GM12878 (cell line): ENCODE measurements at regions of chr1 and their contacts with region 1.

Region 1: GRCh38 chr1:173202430-173203145 is 4.5 kb downstream of the TNFSF4 start:
- DNase-seq: no peak
- ATAC-seq: peak; percentile 54
- H3K4me3 ChIP-seq: no peak overlapping the region
- H3K27ac ChIP-seq: no peak overlapping the region
- H3K4me1 ChIP-seq: peaks cover 14% of the 10 kb centered on the region
- H3K27me3 ChIP-seq: no peaks in the 10 kb centered on the region
- CTCF ChIP-seq: peak; percentile 54 to 69 (median 62)
- EP300 ChIP-seq: no peak
- POLR2A ChIP-seq: no peak
- RAD21 ChIP-seq: peak; percentile 90

Region 2: GRCh38 chr1:172751683-172752082 is 450.9 kb before region 1 on chr1:
- CTCF ChIA-PET with region 1: interaction called, 322 read pairs
- POLR2A ChIA-PET with region 1: no interaction called
- RAD21 ChIA-PET with region 1: interaction called, 201 read pairs
- SMC1A ChIA-PET with region 1: interaction called, 281 read pairs
- in situ Hi-C with region 1: loop called (anchors 5 kb)
- intact Hi-C with region 1: no loop called
- DNase-seq: no peak
- ATAC-seq: no peak
- H3K4me3 ChIP-seq: no peak overlapping the region
- H3K27ac ChIP-seq: no peak overlapping the region
- H3K4me1 ChIP-seq: peaks cover 3% of the 10 kb centered on the region; the same call in 1 of the 2 replicates
- H3K27me3 ChIP-seq: peaks cover 0 to 6% of the 10 kb centered on the region in 2 experiments; a peak in 2 of 4 replicates
- CTCF ChIP-seq: no peak
- EP300 ChIP-seq: no peak
- POLR2A ChIP-seq: no peak
- RAD21 ChIP-seq: no peak

Region 3: DNA sequence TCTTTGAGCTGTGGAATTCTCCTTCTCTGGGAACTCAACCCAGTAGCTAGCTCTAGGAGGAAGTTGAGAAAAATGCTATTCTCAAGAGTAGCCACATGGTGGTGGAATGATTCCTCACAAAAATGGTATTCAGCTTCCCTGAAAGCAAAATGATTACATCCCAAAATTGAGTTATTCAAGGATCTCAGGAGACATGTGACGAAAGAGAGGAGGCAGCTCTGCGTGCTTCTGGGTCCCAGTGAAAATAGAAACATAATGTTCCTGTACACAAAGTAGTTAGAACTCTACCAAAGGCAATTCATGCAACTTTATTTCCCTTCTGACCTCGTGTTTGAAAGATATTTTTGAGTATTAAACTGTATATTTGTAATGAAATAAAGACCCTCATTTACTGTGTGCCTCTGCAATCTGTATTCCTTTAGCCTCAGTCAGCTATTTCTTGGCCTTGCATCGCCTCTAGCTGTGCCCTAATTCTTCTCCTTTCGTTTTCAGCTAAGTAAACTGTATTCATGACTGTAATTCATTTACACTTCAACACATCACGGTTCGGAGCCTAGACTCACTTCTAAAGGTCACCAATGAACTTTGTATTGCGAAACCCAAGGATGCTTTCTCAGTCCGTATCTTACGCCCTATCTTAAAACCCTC is 376.4 kb before region 1 on chr1:
- CTCF ChIA-PET with region 1: interaction called, 414 read pairs
- POLR2A ChIA-PET with region 1: interaction called, 11 read pairs
- RAD21 ChIA-PET with region 1: interaction called, 245 read pairs
- SMC1A ChIA-PET with region 1: interaction called, 316 read pairs
- in situ Hi-C with region 1: loop called (anchors 5 kb)
- intact Hi-C with region 1: loop called (anchors 1 kb)
- DNase-seq: no peak
- ATAC-seq: peak; percentile 65
- H3K4me3 ChIP-seq: no peak overlapping the region
- H3K27ac ChIP-seq: no peak overlapping the region
- H3K4me1 ChIP-seq: peaks cover 4% of the 10 kb centered on the region; the same call in 1 of the 2 replicates
- H3K27me3 ChIP-seq: no peaks in the 10 kb centered on the region
- CTCF ChIP-seq: peak; percentile 47 to 61 (median 51); a peak in 5 of 6 replicates
- EP300 ChIP-seq: no peak
- POLR2A ChIP-seq: no peak
- RAD21 ChIP-seq: peak; percentile 81

Region 4: DNA sequence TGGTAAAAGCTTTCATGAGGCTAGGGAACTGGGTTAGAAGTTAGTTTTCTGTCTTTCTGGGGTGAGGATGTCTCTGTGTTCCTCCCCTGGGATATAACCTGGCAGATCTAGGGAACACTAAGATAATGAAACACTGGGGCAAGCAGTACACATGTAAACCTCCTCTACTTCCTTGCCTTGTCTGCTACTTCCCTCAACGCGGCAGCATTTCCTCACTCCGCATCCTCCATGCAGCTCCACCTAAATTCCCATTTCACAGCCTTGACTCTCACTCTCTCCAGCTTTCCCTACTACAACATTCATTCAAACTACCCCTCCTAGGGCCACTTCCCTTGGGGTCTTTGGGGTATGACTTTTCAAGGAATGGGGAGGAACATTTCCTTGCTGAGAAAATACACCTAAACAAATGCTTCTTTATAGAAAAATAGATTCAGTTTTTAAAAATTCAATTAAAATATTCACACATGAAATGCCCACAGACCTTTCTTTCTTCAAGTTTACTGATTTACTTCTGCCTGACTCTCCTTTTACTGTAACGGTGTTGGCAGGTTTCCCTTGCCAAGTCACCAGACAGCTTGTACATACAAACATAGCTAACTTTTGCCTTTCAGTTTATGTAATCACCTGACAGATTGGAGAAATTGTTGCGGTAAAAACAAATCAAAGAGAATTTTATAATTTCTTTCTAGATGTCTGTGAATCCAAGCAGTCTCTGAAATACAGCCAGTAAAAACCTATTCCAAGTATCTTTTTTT is 242.0 kb before region 1 on chr1:
- CTCF ChIA-PET with region 1: no interaction called
- POLR2A ChIA-PET with region 1: no interaction called
- RAD21 ChIA-PET with region 1: no interaction called
- SMC1A ChIA-PET with region 1: no interaction called
- in situ Hi-C with region 1: no loop called
- intact Hi-C with region 1: no loop called
- DNase-seq: no peak
- ATAC-seq: no peak
- H3K4me3 ChIP-seq: no peak overlapping the region
- H3K27ac ChIP-seq: no peak overlapping the region
- H3K4me1 ChIP-seq: no peaks in the 10 kb centered on the region
- H3K27me3 ChIP-seq: peaks cover 0 to 2% of the 10 kb centered on the region in 2 experiments; a peak in 2 of 4 replicates
- CTCF ChIP-seq: no peak
- EP300 ChIP-seq: no peak
- POLR2A ChIP-seq: no peak
- RAD21 ChIP-seq: no peak

Region 5: DNA sequence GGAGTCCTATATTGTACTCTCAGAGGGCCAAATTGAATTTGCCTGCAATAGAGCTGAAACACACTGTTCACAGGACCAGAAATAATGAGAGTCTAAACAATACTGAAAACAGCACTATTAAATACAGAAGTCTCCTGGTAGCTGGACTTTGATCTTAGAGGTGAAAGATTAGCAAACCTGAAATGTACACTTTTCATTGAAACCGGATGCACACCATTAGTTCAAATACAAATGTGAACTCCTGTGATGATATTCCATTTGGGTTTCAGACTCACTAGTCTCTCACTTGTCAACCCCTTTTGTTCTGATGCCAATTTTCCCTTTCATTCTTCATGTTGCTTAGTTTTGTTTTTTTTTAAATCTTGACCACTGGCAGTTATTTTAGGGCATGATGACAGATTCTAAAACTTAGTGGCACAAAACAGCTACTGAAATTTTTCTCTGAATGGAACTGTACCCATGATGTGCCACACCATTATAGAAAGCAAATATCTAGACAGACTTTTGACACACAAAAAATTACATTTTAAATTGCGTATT is 10.4 kb after region 1 on chr1:
- CTCF ChIA-PET with region 1: interaction called, 104 read pairs
- POLR2A ChIA-PET with region 1: interaction called, 9 read pairs
- RAD21 ChIA-PET with region 1: interaction called, 44 read pairs
- SMC1A ChIA-PET with region 1: interaction called, 189 read pairs
- in situ Hi-C with region 1: no loop called
- intact Hi-C with region 1: no loop called
- DNase-seq: peak; percentile 90
- ATAC-seq: peak; percentile 91
- H3K4me3 ChIP-seq: no peak overlapping the region
- H3K27ac ChIP-seq: no peak overlapping the region
- H3K4me1 ChIP-seq: peaks cover 5% of the 10 kb centered on the region
- H3K27me3 ChIP-seq: no peaks in the 10 kb centered on the region
- CTCF ChIP-seq: no peak
- EP300 ChIP-seq: peak; percentile 58 to 92; a peak in 3 of 4 replicates
- POLR2A ChIP-seq: no peak
- RAD21 ChIP-seq: 0 out of 2 replicates have a peak, but pooled peaks have one; percentile 13

Region 6: GRCh38 chr1:173255214-173255813 is 52.7 kb after region 1 on chr1:
- CTCF ChIA-PET with region 1: interaction called, 12 read pairs
- POLR2A ChIA-PET with region 1: no interaction called
- RAD21 ChIA-PET with region 1: interaction called, 10 read pairs
- SMC1A ChIA-PET with region 1: interaction called, 22 read pairs
- in situ Hi-C with region 1: no loop called
- intact Hi-C with region 1: no loop called
- DNase-seq: peak; percentile 16
- ATAC-seq: peak; percentile 67
- H3K4me3 ChIP-seq: no peak overlapping the region
- H3K27ac ChIP-seq: no peak overlapping the region
- H3K4me1 ChIP-seq: peaks cover 4% of the 10 kb centered on the region; the same call in 1 of the 2 replicates
- H3K27me3 ChIP-seq: no peaks in the 10 kb centered on the region
- CTCF ChIP-seq: peak; percentile 67 to 80 (median 70)
- EP300 ChIP-seq: no peak
- POLR2A ChIP-seq: no peak
- RAD21 ChIP-seq: peak; percentile 68

Region 7: DNA sequence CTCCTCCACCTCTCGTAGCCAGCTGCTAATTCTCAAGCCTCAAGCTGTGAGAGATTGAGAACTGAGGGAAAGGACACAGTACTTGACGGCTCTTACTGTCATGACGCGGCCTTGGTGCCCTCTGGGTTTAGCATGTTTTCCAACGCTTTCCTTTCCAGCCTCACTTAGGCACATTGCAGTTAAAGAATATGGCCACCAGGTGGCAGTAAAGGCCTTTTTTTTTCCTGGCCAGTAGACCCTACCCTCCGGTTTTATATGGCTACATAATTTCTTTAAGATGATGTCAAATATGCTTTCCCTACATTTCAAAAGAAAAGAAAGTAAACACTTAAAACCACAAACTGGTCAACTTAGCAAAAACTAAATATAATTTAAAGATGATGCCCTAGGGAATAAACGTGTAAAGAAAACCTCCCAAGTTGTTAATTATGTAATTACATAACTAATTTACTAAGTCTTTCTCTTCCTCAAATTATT is 217.8 kb after region 1 on chr1:
- CTCF ChIA-PET with region 1: interaction called, 21 read pairs
- POLR2A ChIA-PET with region 1: interaction called, 7 read pairs
- RAD21 ChIA-PET with region 1: interaction called, 105 read pairs
- SMC1A ChIA-PET with region 1: interaction called, 348 read pairs
- in situ Hi-C with region 1: no loop called
- intact Hi-C with region 1: no loop called
- DNase-seq: no peak
- ATAC-seq: peak; percentile 26
- H3K4me3 ChIP-seq: no peak overlapping the region
- H3K27ac ChIP-seq: no peak overlapping the region
- H3K4me1 ChIP-seq: peaks cover 39% of the 10 kb centered on the region
- H3K27me3 ChIP-seq: no peaks in the 10 kb centered on the region
- CTCF ChIP-seq: peak; percentile 68 to 80 (median 73)
- EP300 ChIP-seq: no peak
- POLR2A ChIP-seq: no peak
- RAD21 ChIP-seq: peak; percentile 90